Endothelial cell of umbilical vein (primary cell): ENCODE measurements at regions of chr10 and their contacts with region 1.

Region 1: GRCh38 chr10:24901686-24902399 is 50.6 kb downstream of the PRTFDC1 start:
- DNase-seq: peak; percentile 75
- H3K4me3 ChIP-seq: no peak overlapping the region
- H3K27ac ChIP-seq: no peak overlapping the region
- H3K4me1 ChIP-seq: peaks cover 27% of the 10 kb centered on the region
- H3K27me3 ChIP-seq: no peaks in the 10 kb centered on the region
- CTCF ChIP-seq: no peak
- POLR2A ChIP-seq: no peak

Region 2: GRCh38 chr10:24920907-24921881 is 19.4 kb after region 1 on chr10:
- CTCF ChIA-PET with region 1: interaction called, 3 read pairs
- POLR2A ChIA-PET with region 1: no interaction called
- dilution Hi-C with region 1: no loop called
- intact Hi-C with region 1: loop called (anchors 2 kb)
- DNase-seq: peak; percentile 93
- H3K4me3 ChIP-seq: no peak overlapping the region
- H3K27ac ChIP-seq: peak overlapping the region; percentile 76
- H3K4me1 ChIP-seq: peaks cover 14% of the 10 kb centered on the region
- H3K27me3 ChIP-seq: no peaks in the 10 kb centered on the region
- CTCF ChIP-seq: no peak
- POLR2A ChIP-seq: no peak